ENCODE measurements at regions of chr6 and their contacts with region 1.

Region 1: DNA sequence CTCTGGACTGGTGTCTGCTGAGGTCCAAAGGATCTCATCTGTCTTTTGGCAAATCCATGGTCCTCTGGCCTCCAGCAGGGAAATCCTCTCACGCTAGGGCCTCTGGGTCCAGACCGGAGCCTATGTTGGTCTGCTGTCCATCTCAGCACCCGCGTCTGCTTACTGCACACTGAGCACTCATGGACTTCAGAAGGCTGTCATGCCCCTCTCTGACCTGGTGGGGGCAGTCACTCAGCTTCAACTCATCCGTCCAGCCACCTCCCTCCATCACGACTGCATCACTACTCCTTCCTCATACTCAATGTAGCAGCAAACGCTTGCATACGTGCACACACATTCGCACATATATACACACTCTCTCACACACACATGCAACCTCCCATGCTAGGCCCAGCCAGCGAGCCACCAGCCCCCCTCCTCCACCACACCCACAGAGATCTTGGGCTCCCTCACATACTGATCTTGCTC is 33.3 kb downstream of the GABRR2 start:
- DNase-seq: peak; percentile 86
- CTCF ChIP-seq: peak; percentile 67

Region 2: GRCh38 chr6:89270951-89271721 is 10.7 kb before region 1 on chr6:
- CTCF ChIA-PET with region 1: interaction called, 30 read pairs
- POLR2A ChIA-PET with region 1: no interaction called
- DNase-seq: peak; percentile 52
- CTCF ChIP-seq: no peak

Measured in GM10248 (cell line).